ENCODE measurements at regions of chr10 and their contacts with region 1.

Region 1: GRCh38 chr10:74151056-74151878 is at the start of gene ADK:
- DNase-seq: peak; percentile 99 to 100 (median 99)
- H3K4me3 ChIP-seq: peak within 1 kb of the TSS; percentile 91 to 95
- H3K4me3 Mint-ChIP-seq: no peak within 1 kb of the TSS
- H3K27ac ChIP-seq: peak within 1 kb of the TSS; percentile 84
- H3K27ac Mint-ChIP-seq: peak within 1 kb of the TSS; percentile 7 to 89 (median 78)
- H3K4me1 ChIP-seq: peaks cover 39% of the 10 kb centered on the region
- H3K4me1 Mint-ChIP-seq: peaks cover 24 to 49% (median 36%) of the 10 kb centered on the region in 4 donors
- H3K27me3 ChIP-seq: no peaks in the 10 kb centered on the region
- H3K27me3 Mint-ChIP-seq: no peaks in the 10 kb centered on the region
- total RNA-seq, gene ADK: 33.7 to 38.5 TPM

Region 2: DNA sequence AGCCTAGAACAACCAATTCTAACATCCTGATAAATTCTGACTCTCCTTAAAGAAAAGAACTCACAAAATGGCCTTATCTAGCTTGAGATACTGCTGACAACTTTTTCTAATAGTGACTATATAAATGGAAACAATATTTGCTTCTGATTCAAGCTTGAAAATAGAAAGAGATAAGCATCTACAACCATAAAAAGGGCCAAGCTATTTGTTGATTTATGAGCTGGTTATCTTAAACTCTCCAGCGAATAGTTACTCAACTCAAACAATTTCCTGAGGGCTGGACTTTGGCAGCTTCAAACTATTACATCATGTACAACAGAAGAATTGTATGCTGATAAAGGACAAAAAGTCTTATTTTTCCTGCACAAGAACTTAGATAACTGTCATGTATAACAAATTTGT is 564.7 kb before region 1 on chr10:
- CTCF ChIA-PET with region 1: no interaction called
- POLR2A ChIA-PET with region 1: no interaction called
- intact Hi-C with region 1: no loop called
- DNase-seq: no peak
- H3K4me3 ChIP-seq: no peak overlapping the region
- H3K4me3 Mint-ChIP-seq: no peak overlapping the region
- H3K27ac ChIP-seq: no peak overlapping the region
- H3K27ac Mint-ChIP-seq: no peak overlapping the region
- H3K4me1 ChIP-seq: peaks cover 12% of the 10 kb centered on the region
- H3K4me1 Mint-ChIP-seq: peaks cover 6 to 15% (median 7%) of the 10 kb centered on the region in 4 donors
- H3K27me3 ChIP-seq: no peaks in the 10 kb centered on the region
- H3K27me3 Mint-ChIP-seq: no peaks in the 10 kb centered on the region

Region 3: DNA sequence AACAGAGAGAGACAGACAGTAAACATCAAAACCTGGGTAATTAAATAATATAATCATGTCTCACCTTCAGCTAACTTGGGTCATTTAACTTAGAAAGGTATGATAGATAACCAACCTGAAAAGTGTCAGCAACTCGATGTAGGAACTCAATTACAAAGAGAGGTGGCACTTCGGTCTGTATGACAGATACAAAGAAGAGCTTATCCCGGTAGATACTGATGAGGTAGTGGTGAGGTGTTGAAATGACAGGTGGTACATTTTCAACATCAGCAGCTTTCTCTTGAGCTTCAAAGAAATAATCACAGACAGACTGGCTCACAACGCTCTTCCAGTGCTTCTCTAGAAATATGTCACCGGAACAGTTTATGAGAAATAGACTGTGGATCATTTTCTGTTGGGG is 13.3 kb before region 1 on chr10:
- CTCF ChIA-PET with region 1: interaction called, 3 read pairs
- POLR2A ChIA-PET with region 1: interaction called, 16 read pairs
- intact Hi-C with region 1: no loop called
- DNase-seq: peak in 1 of 5 donors; percentile 15
- H3K4me3 ChIP-seq: no peak overlapping the region
- H3K4me3 Mint-ChIP-seq: no peak overlapping the region
- H3K27ac ChIP-seq: no peak overlapping the region
- H3K27ac Mint-ChIP-seq: peak overlapping the region in 1 of 7 donors; percentile 14
- H3K4me1 ChIP-seq: no peaks in the 10 kb centered on the region
- H3K4me1 Mint-ChIP-seq: peaks cover 4 to 15% (median 6%) of the 10 kb centered on the region in 4 donors
- H3K27me3 ChIP-seq: no peaks in the 10 kb centered on the region
- H3K27me3 Mint-ChIP-seq: no peaks in the 10 kb centered on the region

Region 4: DNA sequence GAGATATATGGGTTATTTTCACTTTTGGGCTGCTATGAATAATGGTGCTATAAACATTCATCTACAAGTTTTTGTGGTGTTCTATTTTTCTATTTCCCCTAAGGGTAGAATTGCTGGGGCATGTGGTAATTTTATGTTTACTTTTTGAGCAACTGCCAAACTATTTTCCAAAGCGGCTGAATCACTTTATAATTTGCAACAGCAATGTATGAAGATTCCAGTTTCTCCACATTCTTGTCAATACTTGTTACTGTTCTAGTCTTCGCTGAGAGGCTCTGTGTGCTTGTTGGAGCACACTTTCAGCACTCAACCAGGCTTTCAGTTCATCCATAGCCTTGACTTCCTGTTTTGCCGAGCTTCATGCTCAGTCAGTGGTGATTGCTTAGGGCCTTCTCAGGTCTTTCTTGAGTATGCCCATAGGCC is 38.7 kb after region 1 on chr10:
- CTCF ChIA-PET with region 1: interaction called, 3 read pairs
- POLR2A ChIA-PET with region 1: interaction called, 8 read pairs
- intact Hi-C with region 1: loop called (anchors 5 kb)
- DNase-seq: peak in 4 of 5 donors; percentile 28 to 40 (median 34)
- H3K4me3 ChIP-seq: peak overlapping the region; percentile 7 to 11
- H3K4me3 Mint-ChIP-seq: peak overlapping the region in 7 of 8 donors; percentile 42 to 91 (median 77)
- H3K27ac ChIP-seq: peak overlapping the region; percentile 28
- H3K27ac Mint-ChIP-seq: peak overlapping the region; percentile 73 to 98 (median 95)
- H3K4me1 ChIP-seq: peaks cover 41% of the 10 kb centered on the region
- H3K4me1 Mint-ChIP-seq: peaks cover 38 to 74% (median 57%) of the 10 kb centered on the region in 4 donors
- H3K27me3 ChIP-seq: no peaks in the 10 kb centered on the region
- H3K27me3 Mint-ChIP-seq: no peaks in the 10 kb centered on the region

Region 5: DNA sequence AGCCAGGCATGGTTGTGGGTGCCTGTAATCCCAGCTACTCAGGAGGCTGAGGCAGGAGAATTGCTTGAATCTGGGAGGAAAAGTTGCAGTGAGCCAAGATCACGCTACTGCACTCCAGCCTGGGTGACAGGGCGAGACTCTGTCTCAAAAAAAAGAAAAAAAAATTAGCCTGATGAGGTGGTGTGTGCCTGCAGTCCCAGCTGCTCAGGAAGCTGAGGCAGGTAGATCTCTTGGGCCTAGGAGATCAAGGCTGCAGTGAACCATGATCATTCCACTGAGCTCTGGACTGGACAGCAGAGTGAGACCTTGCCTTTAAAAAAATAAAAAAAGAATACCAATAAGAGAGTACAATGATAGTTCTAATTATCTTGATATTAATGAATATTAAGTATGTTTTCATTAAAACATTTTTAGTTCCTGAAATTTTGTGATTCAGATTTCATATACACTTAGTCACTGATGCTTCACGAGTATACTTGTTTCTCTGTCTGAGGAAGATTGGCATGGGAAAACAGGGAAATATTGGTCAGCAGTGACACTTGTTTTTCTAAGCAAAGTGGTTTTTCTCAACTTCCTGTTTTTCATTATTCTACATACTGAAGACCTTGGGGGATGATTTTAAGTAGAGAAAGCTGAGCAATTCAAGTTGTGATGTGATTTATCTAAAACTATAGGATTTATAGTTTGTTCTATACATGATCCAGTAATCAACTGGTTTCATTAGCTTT is 76.6 kb after region 1 on chr10:
- CTCF ChIA-PET with region 1: interaction called, 10 read pairs
- POLR2A ChIA-PET with region 1: interaction called, 19 read pairs
- intact Hi-C with region 1: no loop called
- DNase-seq: peak in 3 of 5 donors; percentile 24 to 28 (median 26)
- H3K4me3 ChIP-seq: no peak overlapping the region
- H3K4me3 Mint-ChIP-seq: peak overlapping the region; percentile 57 to 85 (median 76)
- H3K27ac ChIP-seq: peak overlapping the region; percentile 31
- H3K27ac Mint-ChIP-seq: peak overlapping the region; percentile 89 to 98 (median 94)
- H3K4me1 ChIP-seq: peaks cover 39% of the 10 kb centered on the region
- H3K4me1 Mint-ChIP-seq: peaks cover 16 to 40% (median 27%) of the 10 kb centered on the region in 4 donors
- H3K27me3 ChIP-seq: no peaks in the 10 kb centered on the region
- H3K27me3 Mint-ChIP-seq: no peaks in the 10 kb centered on the region

Region 6: GRCh38 chr10:75111367-75111906 is 960.2 kb after region 1 on chr10 and contains the start of gene SAMD8:
- CTCF ChIA-PET with region 1: no interaction called
- POLR2A ChIA-PET with region 1: interaction called, 3 read pairs
- intact Hi-C with region 1: loop called (anchors 2 kb)
- DNase-seq: peak; percentile 93 to 97 (median 95)
- H3K4me3 ChIP-seq: peak within 1 kb of the TSS; percentile 61 to 88
- H3K4me3 Mint-ChIP-seq: peak within 1 kb of the TSS; percentile 86 to 98 (median 90)
- H3K27ac ChIP-seq: peak within 1 kb of the TSS; percentile 92
- H3K27ac Mint-ChIP-seq: peak within 1 kb of the TSS; percentile 92 to 97 (median 97)
- H3K4me1 ChIP-seq: peaks cover 42% of the 10 kb centered on the region
- H3K4me1 Mint-ChIP-seq: peaks cover 27 to 60% (median 48%) of the 10 kb centered on the region in 4 donors
- H3K27me3 ChIP-seq: no peaks in the 10 kb centered on the region
- H3K27me3 Mint-ChIP-seq: no peaks in the 10 kb centered on the region
- total RNA-seq, gene SAMD8: 17.9 to 20.6 TPM

Measured in CD4-positive, alpha-beta memory T cell (primary cell).